IMR-90 (cell line): ENCODE measurements at regions of chr2 and their contacts with region 1.

Region 1: DNA sequence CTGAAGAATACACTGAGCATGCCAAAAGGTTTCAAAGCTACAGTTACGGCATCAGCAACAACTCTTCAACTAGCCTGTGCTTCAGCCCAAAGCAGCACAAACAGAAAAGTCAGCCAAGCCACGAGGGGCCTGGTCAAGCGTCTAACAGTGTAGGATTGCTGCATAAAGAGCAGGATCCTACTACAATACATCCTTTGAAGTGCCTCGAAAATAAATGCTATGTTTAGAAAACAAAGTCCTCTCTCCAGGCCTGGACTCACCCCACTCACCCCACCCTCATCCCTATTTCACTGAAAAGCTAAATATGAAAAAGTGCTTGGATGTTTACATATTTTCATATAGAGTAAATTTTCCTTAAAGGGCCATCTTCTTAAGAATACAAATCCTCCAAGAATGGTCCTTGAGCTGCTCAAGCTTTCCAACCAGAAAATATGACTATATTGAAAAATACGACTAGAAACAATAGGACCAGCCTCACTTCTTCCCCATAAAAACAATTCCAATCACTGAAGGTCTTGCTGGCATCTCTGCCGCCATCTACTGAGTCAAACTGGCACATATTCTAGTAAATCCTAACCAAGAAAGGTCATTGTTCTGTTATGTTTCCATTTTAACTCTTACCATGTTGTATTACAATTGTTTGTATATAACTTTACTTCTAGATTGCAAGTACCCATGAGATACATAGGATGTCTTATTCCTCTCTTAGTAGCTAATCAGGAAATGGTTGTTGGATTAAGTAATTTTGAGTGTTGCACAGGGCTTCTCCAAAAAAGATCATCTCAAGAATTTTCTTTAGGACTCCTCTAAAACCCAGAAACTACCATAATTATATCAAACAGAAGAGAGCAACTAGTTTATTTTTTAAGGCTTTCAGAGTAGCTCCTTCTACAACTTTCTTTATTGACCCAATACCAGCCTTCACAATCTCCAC is 63.6 kb downstream of the CLHC1 start:
- DNase-seq: peak; percentile 85
- ATAC-seq: peak; percentile 69
- H3K4me3 ChIP-seq: no peak overlapping the region
- H3K27ac ChIP-seq: peak overlapping the region; percentile 59
- H3K4me1 ChIP-seq: peaks cover 24% of the 10 kb centered on the region
- H3K27me3 ChIP-seq: no peaks in the 10 kb centered on the region
- CTCF ChIP-seq: peak; percentile 86
- POLR2A ChIP-seq: peak; percentile 35; the same call in 1 of the 2 replicates
- RAD21 ChIP-seq: peak; percentile 95

Region 2: GRCh38 chr2:54723131-54723995 is 445.1 kb before region 1 on chr2 and contains the start of gene EML6:
- CTCF ChIA-PET with region 1: no interaction called
- POLR2A ChIA-PET with region 1: no interaction called
- dilution Hi-C with region 1: no loop called
- in situ Hi-C with region 1: no loop called
- intact Hi-C with region 1: loop called (anchors 5 kb)
- DNase-seq: peak; percentile 98
- ATAC-seq: peak; percentile 99
- H3K4me3 ChIP-seq: peak within 1 kb of the TSS; percentile 82
- H3K27ac ChIP-seq: peak within 1 kb of the TSS; percentile 42
- H3K4me1 ChIP-seq: peaks cover 3% of the 10 kb centered on the region; the same call in 1 of the 2 replicates
- H3K27me3 ChIP-seq: peaks cover 32% of the 10 kb centered on the region
- CTCF ChIP-seq: no peak; the same call in 1 of the 2 replicates
- POLR2A ChIP-seq: peak; percentile 62
- RAD21 ChIP-seq: no peak; the same call in 1 of the 2 replicates
- total RNA-seq, gene EML6: 0.18 and 0.28 TPM in 2 replicates

Region 3: GRCh38 chr2:54904836-54905235 is 263.7 kb before region 1 on chr2:
- CTCF ChIA-PET with region 1: interaction called, 32 read pairs
- POLR2A ChIA-PET with region 1: no interaction called
- dilution Hi-C with region 1: no loop called
- in situ Hi-C with region 1: loop called (anchors 5 kb)
- intact Hi-C with region 1: no loop called
- DNase-seq: no peak
- ATAC-seq: no peak
- H3K4me3 ChIP-seq: no peak overlapping the region
- H3K27ac ChIP-seq: no peak overlapping the region
- H3K4me1 ChIP-seq: peaks cover 12% of the 10 kb centered on the region
- H3K27me3 ChIP-seq: no peaks in the 10 kb centered on the region
- CTCF ChIP-seq: no peak
- POLR2A ChIP-seq: no peak
- RAD21 ChIP-seq: no peak

Region 4: DNA sequence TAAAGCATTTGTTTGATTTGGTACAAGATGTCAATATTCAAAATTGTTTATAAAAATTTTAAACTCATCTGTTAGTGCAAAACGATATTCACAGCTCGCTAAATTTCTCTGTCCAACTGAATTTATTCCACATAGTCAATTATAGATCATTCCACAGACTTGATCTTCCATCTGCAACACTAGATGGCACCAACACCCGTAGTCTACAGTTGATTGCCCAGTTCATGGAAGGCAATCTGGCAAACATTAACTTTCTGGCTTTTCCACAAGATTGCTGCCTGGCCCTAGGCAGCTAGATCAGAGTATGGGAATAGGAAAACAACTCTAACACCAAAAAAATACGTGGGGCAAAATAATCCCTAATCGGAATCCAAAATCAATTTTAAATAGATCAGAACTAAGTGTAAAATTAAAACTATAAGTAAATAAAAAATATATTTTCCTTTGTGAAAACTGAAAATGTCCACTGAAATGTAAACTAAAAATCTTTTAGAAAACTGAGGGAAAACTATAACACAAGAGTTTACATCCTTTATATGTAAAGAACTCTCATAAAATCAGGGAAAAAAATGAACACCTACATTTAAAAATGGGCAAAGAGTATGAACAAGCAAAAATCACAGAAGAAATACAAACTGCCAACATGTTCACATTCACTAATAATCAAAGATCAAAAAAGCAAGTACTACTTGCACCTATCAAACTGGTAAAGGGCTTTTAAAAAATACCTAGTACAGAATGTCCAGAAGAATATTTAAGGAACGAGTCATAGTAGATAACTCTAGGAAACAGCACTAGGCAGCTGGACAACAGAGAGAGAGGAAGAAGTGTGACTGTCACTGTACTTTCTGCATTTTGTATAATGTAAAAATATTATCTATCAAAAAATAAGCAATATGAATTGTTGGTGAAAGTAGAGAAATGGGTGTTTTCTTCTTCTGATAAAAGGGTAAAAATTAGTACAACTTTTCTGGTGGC is 153.2 kb before region 1 on chr2:
- CTCF ChIA-PET with region 1: interaction called, 9 read pairs
- POLR2A ChIA-PET with region 1: no interaction called
- dilution Hi-C with region 1: loop called (anchors 25 kb)
- in situ Hi-C with region 1: no loop called
- intact Hi-C with region 1: loop called (anchors 1 kb)
- DNase-seq: peak; percentile 65
- ATAC-seq: peak; percentile 28; the same call in 1 of the 2 replicates
- H3K4me3 ChIP-seq: no peak overlapping the region
- H3K27ac ChIP-seq: no peak overlapping the region
- H3K4me1 ChIP-seq: peaks cover 25% of the 10 kb centered on the region
- H3K27me3 ChIP-seq: no peaks in the 10 kb centered on the region
- CTCF ChIP-seq: peak; percentile 57
- POLR2A ChIP-seq: no peak
- RAD21 ChIP-seq: peak; percentile 60

Region 5: DNA sequence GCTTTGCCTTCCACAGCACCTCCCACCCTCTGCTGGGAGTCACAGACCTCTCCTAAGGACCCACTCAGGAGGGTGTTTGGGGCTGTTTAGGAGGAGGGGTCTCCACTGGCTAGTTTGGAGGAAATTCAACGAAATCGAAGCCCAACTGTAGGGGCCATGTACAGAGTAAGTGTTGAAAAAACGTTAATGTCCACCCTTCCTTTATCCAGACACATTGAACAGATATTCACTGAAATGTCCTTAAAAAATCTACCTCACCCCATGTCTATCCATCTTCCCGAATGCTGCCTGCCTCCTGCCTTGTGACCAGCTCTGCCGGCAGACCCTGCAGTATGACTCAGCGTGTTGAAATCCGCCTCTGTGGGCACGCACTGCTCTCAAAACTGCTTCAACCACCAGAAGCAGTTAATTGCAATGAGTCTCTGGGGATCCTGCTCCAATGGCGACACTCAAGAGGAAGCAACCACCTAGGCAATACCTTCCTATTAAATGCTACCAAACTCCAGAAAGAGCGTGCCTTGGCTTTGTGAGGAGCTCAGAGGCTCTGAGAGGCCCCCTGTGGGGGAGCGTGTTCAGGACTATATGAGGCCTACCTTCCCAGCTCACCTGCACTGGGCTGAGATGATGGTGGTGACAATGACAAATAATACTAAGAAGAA is 56.8 kb before region 1 on chr2:
- CTCF ChIA-PET with region 1: interaction called, 8 read pairs
- POLR2A ChIA-PET with region 1: interaction called, 4 read pairs
- dilution Hi-C with region 1: no loop called
- in situ Hi-C with region 1: no loop called
- intact Hi-C with region 1: loop called (anchors 2 kb)
- DNase-seq: peak; percentile 96
- ATAC-seq: peak; percentile 55
- H3K4me3 ChIP-seq: no peak overlapping the region
- H3K27ac ChIP-seq: peak overlapping the region; percentile 91
- H3K4me1 ChIP-seq: peaks cover 42% of the 10 kb centered on the region
- H3K27me3 ChIP-seq: no peaks in the 10 kb centered on the region
- CTCF ChIP-seq: no peak
- POLR2A ChIP-seq: peak; percentile 39; the same call in 1 of the 2 replicates
- RAD21 ChIP-seq: no peak

Region 6: GRCh38 chr2:55338268-55338667 is 169.8 kb after region 1 on chr2:
- CTCF ChIA-PET with region 1: no interaction called
- POLR2A ChIA-PET with region 1: no interaction called
- dilution Hi-C with region 1: no loop called
- in situ Hi-C with region 1: no loop called
- intact Hi-C with region 1: no loop called
- DNase-seq: peak; percentile 67
- ATAC-seq: peak; percentile 63
- H3K4me3 ChIP-seq: no peak overlapping the region
- H3K27ac ChIP-seq: no peak overlapping the region
- H3K4me1 ChIP-seq: peaks cover 2% of the 10 kb centered on the region; the same call in 1 of the 2 replicates
- H3K27me3 ChIP-seq: no peaks in the 10 kb centered on the region
- CTCF ChIP-seq: no peak
- POLR2A ChIP-seq: no peak
- RAD21 ChIP-seq: no peak